Activated B cell treated with CpG ODN at 0.5 μM for 24 hours (primary cell): ENCODE measurements at regions of chr1 and their contacts with region 1.

Region 1: DNA sequence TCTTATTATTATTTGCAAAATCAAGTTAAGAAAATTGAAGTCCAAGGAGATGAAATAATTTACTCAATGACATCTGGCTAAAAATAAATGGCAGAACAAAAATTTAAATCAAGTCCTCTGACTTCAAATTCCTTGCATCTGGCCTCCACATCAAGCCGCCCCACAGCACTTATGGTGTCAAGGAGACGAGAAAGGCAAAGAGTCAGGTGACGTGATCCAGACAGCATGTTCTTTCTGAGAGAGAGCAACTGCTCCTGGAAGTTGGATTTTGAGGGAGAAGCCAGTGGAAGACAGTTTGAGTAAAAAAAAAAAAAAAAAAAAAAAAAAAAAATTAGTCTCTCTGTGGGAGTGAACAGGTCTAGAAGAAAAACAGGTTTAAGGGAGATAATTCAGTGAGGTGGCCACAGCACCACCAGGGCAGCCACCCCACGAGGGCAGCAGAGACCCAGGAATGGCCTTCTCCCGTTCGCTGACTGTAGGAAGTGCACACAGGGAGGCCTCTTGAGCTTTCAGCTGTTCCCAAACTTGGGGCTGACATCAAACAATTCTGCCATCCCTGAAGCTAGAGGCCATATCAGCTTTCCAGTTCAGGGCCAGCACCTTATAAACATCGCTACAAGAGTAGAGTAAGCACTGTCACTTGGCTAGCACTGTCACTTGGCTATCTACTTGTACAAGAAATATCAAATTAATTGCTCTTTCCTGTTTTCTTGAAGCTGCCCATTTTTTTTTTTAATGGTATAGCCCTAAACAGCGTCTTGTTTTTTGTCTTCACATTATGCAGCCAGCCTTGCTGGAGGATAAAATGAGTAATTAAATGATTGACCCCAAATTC is 7.8 kb downstream of the C1orf162 start:
- DNase-seq: no peak
- ATAC-seq: peak; percentile 73
- H3K4me3 Mint-ChIP-seq: no peak overlapping the region
- H3K27ac Mint-ChIP-seq: no peak overlapping the region
- H3K4me1 Mint-ChIP-seq: peaks cover 42% of the 10 kb centered on the region
- H3K27me3 Mint-ChIP-seq: no peaks in the 10 kb centered on the region
- CTCF ChIP-seq: no peak

Region 2: GRCh38 chr1:110872745-110873720 is 608.6 kb before region 1 on chr1 and contains the start of gene CD53:
- CTCF ChIA-PET with region 1: no interaction called
- POLR2A ChIA-PET with region 1: no interaction called
- intact Hi-C with region 1: loop called (anchors 10 kb)
- DNase-seq: peak; percentile 27
- ATAC-seq: peak; percentile 64
- H3K4me3 Mint-ChIP-seq: peak within 1 kb of the TSS; percentile 96
- H3K27ac Mint-ChIP-seq: peak within 1 kb of the TSS; percentile 99
- H3K4me1 Mint-ChIP-seq: peaks cover 75% of the 10 kb centered on the region
- H3K27me3 Mint-ChIP-seq: no peaks in the 10 kb centered on the region
- CTCF ChIP-seq: no peak
- total RNA-seq, gene CD53: 491 and 522 TPM in 2 replicates

Region 3: GRCh38 chr1:111126354-111126753 is 355.2 kb before region 1 on chr1:
- CTCF ChIA-PET with region 1: no interaction called
- POLR2A ChIA-PET with region 1: no interaction called
- intact Hi-C with region 1: no loop called
- DNase-seq: no peak
- ATAC-seq: no peak
- H3K4me3 Mint-ChIP-seq: peak overlapping the region; percentile 12
- H3K27ac Mint-ChIP-seq: peak overlapping the region; percentile 85
- H3K4me1 Mint-ChIP-seq: peaks cover 92% of the 10 kb centered on the region
- H3K27me3 Mint-ChIP-seq: no peaks in the 10 kb centered on the region
- CTCF ChIP-seq: no peak

Region 4: GRCh38 chr1:111454859-111455641 is 26.6 kb before region 1 on chr1:
- CTCF ChIA-PET with region 1: interaction called, 4 read pairs
- POLR2A ChIA-PET with region 1: interaction called, 10 read pairs
- intact Hi-C with region 1: no loop called
- DNase-seq: no peak
- ATAC-seq: peak; percentile 28
- H3K4me3 Mint-ChIP-seq: no peak overlapping the region
- H3K27ac Mint-ChIP-seq: no peak overlapping the region
- H3K4me1 Mint-ChIP-seq: peaks cover 55% of the 10 kb centered on the region
- H3K27me3 Mint-ChIP-seq: no peaks in the 10 kb centered on the region
- CTCF ChIP-seq: no peak

Region 5: GRCh38 chr1:111656086-111657017 is 174.7 kb after region 1 on chr1:
- CTCF ChIA-PET with region 1: interaction called, 6 read pairs
- POLR2A ChIA-PET with region 1: interaction called, 7 read pairs
- intact Hi-C with region 1: loop called (anchors 1 kb)
- DNase-seq: no peak
- ATAC-seq: no peak
- H3K4me3 Mint-ChIP-seq: no peak overlapping the region
- H3K27ac Mint-ChIP-seq: no peak overlapping the region
- H3K4me1 Mint-ChIP-seq: peaks cover 35% of the 10 kb centered on the region
- H3K27me3 Mint-ChIP-seq: no peaks in the 10 kb centered on the region
- CTCF ChIP-seq: peak; percentile 52

Region 6: DNA sequence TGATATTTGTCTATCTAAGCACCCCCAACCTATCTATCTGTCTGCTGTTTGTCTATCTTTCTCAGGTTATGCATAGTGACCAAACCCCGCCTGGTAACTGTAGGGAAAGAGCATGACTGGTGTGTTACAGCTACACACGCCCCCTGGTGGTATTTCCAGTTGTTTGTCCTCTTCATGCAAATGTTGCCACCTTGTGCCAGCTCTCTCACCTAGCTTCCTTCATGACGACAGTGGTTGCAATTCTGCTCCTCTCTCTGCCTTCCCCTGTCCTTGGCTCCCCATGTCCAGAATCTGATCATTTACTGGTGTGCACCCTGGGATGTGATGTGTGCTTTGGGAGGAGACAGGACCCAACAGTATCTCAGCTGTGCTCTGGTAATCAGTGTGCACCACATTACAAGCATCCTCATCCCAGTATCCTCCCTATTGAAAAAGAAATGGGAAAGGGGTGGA is 265.7 kb after region 1 on chr1:
- CTCF ChIA-PET with region 1: interaction called, 10 read pairs
- POLR2A ChIA-PET with region 1: no interaction called
- intact Hi-C with region 1: loop called (anchors 1 kb)
- DNase-seq: no peak
- ATAC-seq: peak; percentile 77
- H3K4me3 Mint-ChIP-seq: no peak overlapping the region
- H3K27ac Mint-ChIP-seq: no peak overlapping the region
- H3K4me1 Mint-ChIP-seq: no peaks in the 10 kb centered on the region
- H3K27me3 Mint-ChIP-seq: no peaks in the 10 kb centered on the region
- CTCF ChIP-seq: no peak

Region 7: DNA sequence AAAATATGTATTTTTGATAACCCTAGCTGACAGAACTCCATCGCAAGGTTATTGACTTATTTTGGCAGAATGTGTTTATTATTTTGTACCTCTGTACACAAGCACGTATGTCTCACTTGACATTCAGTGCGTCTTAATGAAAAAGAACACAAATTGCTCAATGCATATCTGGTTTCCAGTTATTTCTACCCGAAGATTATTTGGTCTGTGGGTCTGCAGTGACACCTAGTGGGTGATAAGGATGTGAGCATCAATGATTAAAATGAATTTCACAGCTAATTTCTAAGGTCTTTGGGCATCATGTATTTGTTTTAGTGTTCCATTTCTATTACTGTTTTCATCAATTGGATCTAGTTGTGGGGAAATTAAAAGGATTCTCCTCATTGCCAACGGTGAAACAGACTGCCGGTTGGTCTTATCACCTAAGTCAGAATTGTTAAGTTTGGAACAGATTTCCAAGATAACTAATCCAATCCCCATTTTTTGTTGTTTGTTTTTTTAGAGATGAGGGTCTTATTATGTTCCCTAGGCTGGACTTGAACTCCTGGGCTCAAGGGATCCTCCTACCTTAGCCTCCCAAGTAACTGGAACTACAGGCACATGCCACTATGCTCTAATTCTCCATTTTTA is 288.0 kb after region 1 on chr1:
- CTCF ChIA-PET with region 1: interaction called, 21 read pairs
- POLR2A ChIA-PET with region 1: no interaction called
- intact Hi-C with region 1: loop called (anchors 1 kb)
- DNase-seq: no peak
- ATAC-seq: peak; percentile 58
- H3K4me3 Mint-ChIP-seq: no peak overlapping the region
- H3K27ac Mint-ChIP-seq: no peak overlapping the region
- H3K4me1 Mint-ChIP-seq: no peaks in the 10 kb centered on the region
- H3K27me3 Mint-ChIP-seq: no peaks in the 10 kb centered on the region
- CTCF ChIP-seq: no peak